ENCODE measurements at regions of chr18 and their contacts with region 1.

Region 1: GRCh38 chr18:65725251-65726050 is 25.4 kb upstream of the CDH7 start:
- DNase-seq: peak; percentile 61
- H3K4me3 Mint-ChIP-seq: no peak overlapping the region
- H3K27ac Mint-ChIP-seq: no peak overlapping the region
- H3K4me1 Mint-ChIP-seq: no peaks in the 10 kb centered on the region
- H3K27me3 Mint-ChIP-seq: peaks cover 21% of the 10 kb centered on the region
- CTCF ChIP-seq: peak; percentile 34

Region 2: DNA sequence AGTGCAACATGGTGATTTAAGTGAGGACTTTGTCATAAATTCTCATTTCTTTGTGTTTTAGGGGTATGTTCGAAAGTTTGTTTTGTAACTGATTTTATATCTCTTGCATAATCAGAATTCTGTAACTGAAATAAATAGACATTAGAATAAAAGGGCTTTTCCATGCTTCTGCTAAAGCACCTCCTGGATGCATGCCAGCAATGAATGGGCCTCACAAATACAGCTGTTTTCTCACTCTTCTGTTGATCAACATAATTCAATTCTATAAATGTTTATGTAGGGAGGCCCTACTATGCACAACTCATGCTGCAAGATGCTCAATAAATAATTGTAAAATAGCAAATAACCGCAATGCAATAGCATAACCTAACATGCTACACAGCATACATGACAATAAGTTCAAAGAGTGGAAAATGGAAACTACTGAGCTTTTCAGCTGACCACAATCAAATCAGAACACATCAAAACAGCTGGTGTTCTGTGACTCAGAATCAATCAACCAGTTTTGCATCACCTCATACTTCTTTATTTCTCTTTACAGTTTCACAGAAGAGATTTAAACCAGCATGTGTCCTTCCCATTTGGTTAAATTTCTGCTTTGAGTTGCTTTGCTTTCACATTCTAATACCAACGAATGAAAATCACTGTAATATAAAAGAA is 36.3 kb after region 1 on chr18:
- CTCF ChIA-PET with region 1: no interaction called
- POLR2A ChIA-PET with region 1: no interaction called
- intact Hi-C with region 1: no loop called
- DNase-seq: no peak
- H3K4me3 Mint-ChIP-seq: no peak overlapping the region
- H3K27ac Mint-ChIP-seq: no peak overlapping the region
- H3K4me1 Mint-ChIP-seq: peaks cover under 1% of the 10 kb centered on the region
- H3K27me3 Mint-ChIP-seq: peaks cover 44% of the 10 kb centered on the region
- CTCF ChIP-seq: no peak

Region 3: GRCh38 chr18:65788373-65788772 is 62.9 kb after region 1 on chr18:
- CTCF ChIA-PET with region 1: interaction called, 10 read pairs
- POLR2A ChIA-PET with region 1: no interaction called
- intact Hi-C with region 1: loop called (anchors 2 kb)
- DNase-seq: peak; percentile 25
- H3K4me3 Mint-ChIP-seq: no peak overlapping the region
- H3K27ac Mint-ChIP-seq: no peak overlapping the region
- H3K4me1 Mint-ChIP-seq: no peaks in the 10 kb centered on the region
- H3K27me3 Mint-ChIP-seq: peaks cover 48% of the 10 kb centered on the region
- CTCF ChIP-seq: no peak

Region 4: GRCh38 chr18:65897292-65897691 is 171.8 kb after region 1 on chr18:
- CTCF ChIA-PET with region 1: no interaction called
- POLR2A ChIA-PET with region 1: no interaction called
- intact Hi-C with region 1: no loop called
- DNase-seq: no peak
- H3K4me3 Mint-ChIP-seq: no peak overlapping the region
- H3K27ac Mint-ChIP-seq: no peak overlapping the region
- H3K4me1 Mint-ChIP-seq: no peaks in the 10 kb centered on the region
- H3K27me3 Mint-ChIP-seq: peaks cover 27% of the 10 kb centered on the region
- CTCF ChIP-seq: no peak

Region 5: DNA sequence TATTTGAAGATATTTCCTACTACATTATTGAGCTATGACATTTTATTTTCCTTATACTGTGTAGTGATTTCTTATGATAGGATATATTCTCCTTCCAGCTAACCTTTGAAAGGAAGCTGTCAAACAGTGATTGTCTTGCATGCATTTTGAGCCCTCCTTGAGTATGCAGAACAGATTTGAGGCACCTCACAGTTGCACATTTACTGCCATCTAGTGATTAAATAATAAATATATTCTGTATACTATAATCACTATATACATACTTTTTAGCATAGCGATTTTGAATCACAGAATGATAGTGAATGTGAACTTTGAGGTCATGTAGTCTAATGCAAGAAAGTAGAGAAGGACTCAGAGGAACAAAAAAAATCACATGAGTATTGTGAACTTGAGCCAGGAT is 1146.8 kb after region 1 on chr18:
- CTCF ChIA-PET with region 1: no interaction called
- POLR2A ChIA-PET with region 1: no interaction called
- intact Hi-C with region 1: loop called (anchors 5 kb)
- DNase-seq: peak; percentile 24
- H3K4me3 Mint-ChIP-seq: no peak overlapping the region
- H3K27ac Mint-ChIP-seq: no peak overlapping the region
- H3K4me1 Mint-ChIP-seq: no peaks in the 10 kb centered on the region
- H3K27me3 Mint-ChIP-seq: peaks cover 31% of the 10 kb centered on the region
- CTCF ChIP-seq: peak; percentile 34

Measured in MCF 10A (cell line).